ENCODE measurements at regions of chr6 and their contacts with region 1.

Region 1: GRCh38 chr6:20534295-20535262 is at the start of gene CDKAL1:
- DNase-seq: peak; percentile 83 to 91 (median 88)
- H3K4me3 ChIP-seq: peak within 1 kb of the TSS; percentile 83
- H3K27ac ChIP-seq: peak within 1 kb of the TSS; percentile 55 to 56
- H3K4me1 ChIP-seq: peaks cover 5% of the 10 kb centered on the region
- H3K27me3 ChIP-seq: no peaks in the 10 kb centered on the region
- CTCF ChIP-seq: no peak
- EP300 ChIP-seq: no peak
- POLR2A ChIP-seq: peak; percentile 48
- total RNA-seq, gene CDKAL1: 10.6 to 21.3 (median 20.3) TPM

Region 2: DNA sequence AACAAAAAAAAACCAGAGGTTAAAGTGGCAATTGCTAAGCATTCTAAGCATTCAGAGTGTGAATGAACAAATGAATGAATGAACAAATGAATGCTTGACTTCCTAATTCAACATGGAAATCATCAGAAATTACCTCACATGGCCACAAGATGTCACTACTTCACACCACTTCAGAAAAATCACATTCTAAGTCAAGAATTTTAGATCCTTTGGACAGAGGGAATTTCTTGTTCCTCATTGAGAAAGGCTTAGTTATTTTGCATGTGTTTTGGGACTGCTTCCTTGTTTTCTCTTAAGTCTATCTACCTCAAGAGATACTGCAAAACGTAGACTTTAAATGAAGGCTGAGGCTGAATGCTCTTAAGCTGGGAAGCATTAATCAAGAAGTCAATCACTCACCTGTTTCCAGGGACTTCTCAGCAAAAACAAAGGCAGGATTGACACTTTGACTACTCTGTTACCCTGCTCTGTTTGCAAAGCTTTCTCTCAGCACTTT is 442.5 kb before region 1 on chr6:
- intact Hi-C with region 1: loop called in 2 of 4 experiments (anchors 5 kb)
- DNase-seq: no peak
- H3K4me3 ChIP-seq: no peak overlapping the region
- H3K27ac ChIP-seq: no peak overlapping the region
- H3K4me1 ChIP-seq: no peaks in the 10 kb centered on the region
- H3K27me3 ChIP-seq: no peaks in the 10 kb centered on the region
- CTCF ChIP-seq: peak; percentile 13 to 56 (median 41)
- EP300 ChIP-seq: no peak
- POLR2A ChIP-seq: no peak

Region 3: DNA sequence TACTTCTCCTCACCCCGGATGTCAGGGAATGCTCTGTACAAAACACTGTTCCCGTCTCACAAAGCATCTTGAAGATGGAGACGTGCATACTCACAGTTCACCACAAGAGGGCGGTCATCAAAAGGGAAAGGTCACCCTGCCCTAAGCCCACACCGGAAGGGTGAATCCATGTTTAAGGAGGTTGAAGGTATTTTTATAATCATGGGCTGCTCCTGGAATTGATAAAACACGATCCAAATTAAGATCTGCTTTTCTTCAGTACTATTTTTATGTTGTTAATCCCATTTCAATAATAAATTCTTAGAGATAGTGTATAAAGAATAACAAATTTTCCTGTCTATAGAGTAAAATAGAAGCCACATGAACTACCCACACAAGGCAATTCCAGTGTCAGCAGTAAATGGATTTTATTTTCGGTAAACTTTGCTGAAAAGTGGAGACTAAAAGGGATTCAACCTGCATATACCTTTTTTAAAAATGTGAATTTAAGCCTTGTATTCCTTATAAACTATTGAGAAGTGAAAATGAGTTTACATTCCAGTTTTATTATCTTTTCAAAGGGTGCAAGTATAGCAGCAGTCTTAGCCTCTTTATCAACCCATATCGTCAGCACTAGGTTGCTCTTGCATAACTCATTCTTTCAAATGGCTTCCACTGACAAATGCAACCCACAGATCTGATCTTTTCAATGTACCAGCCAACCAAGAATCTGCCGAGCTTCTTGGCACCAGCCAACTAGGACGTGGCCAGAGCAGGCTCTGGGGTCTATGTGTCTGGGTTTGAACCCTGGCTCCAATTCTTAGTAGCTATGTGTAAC is 242.6 kb before region 1 on chr6:
- intact Hi-C with region 1: loop called in 2 of 4 experiments (anchors 5 to 10 kb)
- DNase-seq: peak; percentile 60 to 82 (median 75)
- H3K4me3 ChIP-seq: no peak overlapping the region
- H3K27ac ChIP-seq: no peak overlapping the region
- H3K4me1 ChIP-seq: no peaks in the 10 kb centered on the region
- H3K27me3 ChIP-seq: no peaks in the 10 kb centered on the region
- CTCF ChIP-seq: peak; percentile 25 to 74 (median 54)
- EP300 ChIP-seq: no peak
- POLR2A ChIP-seq: no peak

Region 4: DNA sequence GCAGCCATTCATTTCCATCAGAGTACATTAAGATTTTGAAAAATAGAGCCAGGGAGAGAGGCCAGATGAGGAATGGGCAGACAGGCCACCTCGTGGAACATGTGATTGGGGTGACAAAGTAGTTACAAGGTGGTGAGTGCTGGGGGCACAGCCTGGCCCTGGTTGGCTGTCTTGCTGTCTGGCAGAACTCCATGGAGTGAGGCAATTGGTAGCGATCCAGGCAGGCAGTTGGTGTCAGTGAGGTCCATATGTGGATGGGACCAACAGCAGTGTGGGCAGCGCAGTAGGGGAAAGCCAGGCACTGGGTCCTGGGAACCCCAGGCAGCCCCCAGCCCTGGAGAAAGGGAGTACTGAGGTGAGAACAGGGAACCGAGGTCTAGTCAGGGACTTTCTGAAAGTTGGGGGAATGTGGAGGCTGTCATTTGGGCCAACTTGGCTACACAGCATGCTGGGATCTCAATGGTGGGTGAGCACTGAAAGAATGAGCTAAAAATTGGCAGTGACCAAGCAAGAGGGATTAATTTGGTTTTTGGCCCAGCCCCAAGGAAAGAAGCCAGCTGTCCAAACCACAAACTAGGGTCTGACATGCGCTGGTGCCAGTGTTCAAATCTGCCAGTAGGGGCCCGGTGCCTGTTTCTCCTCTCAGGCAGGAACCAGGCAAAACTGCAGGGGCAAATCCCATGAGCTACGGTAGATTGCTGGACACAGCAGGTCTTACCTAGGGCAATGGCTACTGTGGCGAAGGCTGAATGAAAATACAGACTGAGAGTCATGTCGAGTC is 194.3 kb before region 1 on chr6:
- intact Hi-C with region 1: no loop called
- DNase-seq: no peak
- H3K4me3 ChIP-seq: no peak overlapping the region
- H3K27ac ChIP-seq: no peak overlapping the region
- H3K4me1 ChIP-seq: no peaks in the 10 kb centered on the region
- H3K27me3 ChIP-seq: no peaks in the 10 kb centered on the region
- CTCF ChIP-seq: no peak
- EP300 ChIP-seq: no peak
- POLR2A ChIP-seq: no peak

Region 5: DNA sequence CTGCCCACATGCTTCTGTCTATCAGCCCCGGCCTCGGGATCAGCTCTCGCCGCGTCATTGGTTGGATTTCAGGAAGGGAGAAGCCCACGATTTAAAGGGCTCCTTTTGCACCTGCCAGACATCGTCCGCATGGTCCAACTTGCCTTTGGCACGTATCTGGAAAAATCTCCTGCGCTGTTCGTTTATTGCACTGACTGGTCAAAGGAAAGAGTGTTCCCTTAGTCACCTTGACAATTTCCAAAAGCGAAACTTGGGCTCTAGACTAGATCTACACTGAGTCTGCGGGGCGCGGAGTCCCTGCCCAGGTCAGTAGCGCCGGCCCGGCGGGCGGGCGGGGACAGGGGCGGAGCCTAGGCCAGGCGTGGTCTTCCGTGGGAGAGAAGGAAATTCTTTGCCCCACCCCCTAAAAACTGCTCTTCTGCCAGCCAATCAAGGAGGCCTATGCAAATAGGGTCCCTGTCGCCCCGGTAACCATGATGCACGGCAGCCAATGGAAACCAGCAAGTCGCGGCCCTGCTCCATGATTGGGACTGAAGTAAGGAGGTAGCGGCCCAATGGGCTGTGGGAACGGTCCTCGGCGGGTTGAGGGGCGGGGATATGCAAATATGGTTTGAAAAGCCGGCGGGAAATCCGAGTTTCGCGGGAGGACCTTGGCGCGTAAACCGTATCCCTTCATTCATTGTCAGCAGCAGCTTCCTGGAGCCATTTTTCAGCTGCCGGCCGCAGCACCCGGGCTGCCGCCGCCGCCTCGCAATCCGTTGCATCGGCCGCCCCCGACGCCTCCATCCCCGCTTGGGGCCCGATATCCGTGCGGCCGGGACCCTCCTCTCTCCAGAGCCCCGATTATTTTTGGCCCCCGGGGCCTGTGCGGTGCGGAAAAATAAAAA is 133.1 kb before region 1 on chr6 and contains the start of gene E2F3:
- intact Hi-C with region 1: loop called in 1 of 4 experiments (anchors 10 kb)
- DNase-seq: peak; percentile 99 to 100 (median 99)
- H3K4me3 ChIP-seq: peak within 1 kb of the TSS; percentile 54
- H3K27ac ChIP-seq: peak within 1 kb of the TSS; percentile 19 to 42
- H3K4me1 ChIP-seq: no peaks in the 10 kb centered on the region
- H3K27me3 ChIP-seq: no peaks in the 10 kb centered on the region
- CTCF ChIP-seq: no peak
- EP300 ChIP-seq: no peak
- POLR2A ChIP-seq: no peak
- total RNA-seq, gene E2F3: 0.36 to 4.7 (median 2.7) TPM

Region 6: GRCh38 chr6:20411953-20412681 is 122.5 kb before region 1 on chr6:
- intact Hi-C with region 1: loop called in 2 of 4 experiments (anchors 5 to 10 kb)
- DNase-seq: no peak
- H3K4me3 ChIP-seq: no peak overlapping the region
- H3K27ac ChIP-seq: no peak overlapping the region
- H3K4me1 ChIP-seq: no peaks in the 10 kb centered on the region
- H3K27me3 ChIP-seq: no peaks in the 10 kb centered on the region
- CTCF ChIP-seq: no peak
- EP300 ChIP-seq: no peak
- POLR2A ChIP-seq: no peak